ENCODE measurements at regions of chr19 and their contacts with region 1.

Region 1: GRCh38 chr19:1249298-1249989 is 1.1 kb downstream of the MIDN start:
- DNase-seq: peak; percentile 93
- H3K4me3 ChIP-seq: peak overlapping the region; percentile 65 to 84 (median 72)
- H3K27ac ChIP-seq: peak overlapping the region; percentile 41
- H3K4me1 ChIP-seq: peaks cover 26% of the 10 kb centered on the region
- H3K27me3 ChIP-seq: no peaks in the 10 kb centered on the region
- CTCF ChIP-seq: no peak

Region 2: GRCh38 chr19:1260636-1261537 is 11.4 kb after region 1 on chr19:
- CTCF ChIA-PET with region 1: interaction called, 126 read pairs
- dilution Hi-C with region 1: no loop called
- in situ Hi-C with region 1: no loop called
- intact Hi-C with region 1: loop called (anchors 1 kb)
- DNase-seq: peak; percentile 94
- H3K4me3 ChIP-seq: peak overlapping the region; percentile 76 to 85 (median 79)
- H3K27ac ChIP-seq: peak overlapping the region; percentile 90
- H3K4me1 ChIP-seq: peaks cover 67% of the 10 kb centered on the region
- H3K27me3 ChIP-seq: no peaks in the 10 kb centered on the region
- CTCF ChIP-seq: no peak

Region 3: GRCh38 chr19:1269065-1269477 is 19.6 kb after region 1 on chr19 and contains the start of gene CIRBP:
- CTCF ChIA-PET with region 1: interaction called, 126 read pairs
- dilution Hi-C with region 1: no loop called
- in situ Hi-C with region 1: no loop called
- intact Hi-C with region 1: loop called (anchors 1 kb)
- DNase-seq: peak; percentile 98
- H3K4me3 ChIP-seq: peak within 1 kb of the TSS; percentile 55 to 72 (median 61)
- H3K27ac ChIP-seq: peak within 1 kb of the TSS; percentile 77
- H3K4me1 ChIP-seq: peaks cover 54% of the 10 kb centered on the region
- H3K27me3 ChIP-seq: no peaks in the 10 kb centered on the region
- CTCF ChIP-seq: no peak
- total RNA-seq, gene CIRBP: 196 to 221 TPM

Region 4: GRCh38 chr19:1285737-1286360 is 36.4 kb after region 1 on chr19 and contains the start of gene EFNA2:
- CTCF ChIA-PET with region 1: no interaction called
- dilution Hi-C with region 1: no loop called
- in situ Hi-C with region 1: no loop called
- intact Hi-C with region 1: no loop called
- DNase-seq: no peak
- H3K4me3 ChIP-seq: no peak within 1 kb of the TSS
- H3K27ac ChIP-seq: no peak within 1 kb of the TSS
- H3K4me1 ChIP-seq: no peaks in the 10 kb centered on the region
- H3K27me3 ChIP-seq: peaks cover 19% of the 10 kb centered on the region
- CTCF ChIP-seq: no peak
- total RNA-seq, gene EFNA2: 0.33 TPM in 1 of 2 donors, not detected in the other